Prostate gland (tissue), 2 donors: ENCODE measurements at regions of chr2 and their contacts with region 1.

Region 1: DNA sequence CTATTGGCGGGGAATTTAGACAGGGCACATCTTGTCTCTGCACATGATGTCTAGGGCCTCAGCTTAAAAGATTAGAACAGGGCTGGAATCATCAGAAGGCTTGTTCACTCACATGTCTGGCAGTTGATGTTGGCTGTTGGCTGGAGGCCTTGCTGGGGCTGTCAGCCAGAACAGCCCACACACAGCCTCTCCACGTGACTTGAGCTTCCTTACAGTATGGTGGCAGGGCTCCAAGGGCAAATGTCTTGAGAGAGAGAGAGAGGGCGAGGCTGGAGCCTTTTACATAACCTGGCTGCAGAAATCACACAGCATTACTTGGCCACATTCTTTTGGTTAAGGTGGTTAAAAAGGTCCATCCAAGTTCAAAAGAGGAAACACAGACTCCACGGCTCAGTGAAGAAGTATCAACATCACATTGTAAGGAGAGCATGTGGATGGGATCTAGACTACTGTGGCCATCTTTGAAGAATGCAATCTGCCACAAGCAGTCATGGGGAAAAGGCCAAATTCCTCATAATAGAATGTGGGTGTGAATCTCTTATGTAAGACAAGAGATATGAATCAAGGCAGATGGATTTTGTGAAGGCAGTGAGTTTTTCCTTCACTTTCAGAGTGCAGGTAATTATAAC is 30.4 kb downstream of the SRSF7 start:
- DNase-seq: peak; percentile 68
- H3K4me3 ChIP-seq: no peak overlapping the region
- H3K27ac ChIP-seq: peak overlapping the region; percentile 29 to 46
- H3K4me1 ChIP-seq: no peaks in the 10 kb centered on the region
- H3K27me3 ChIP-seq: no peaks in the 10 kb centered on the region
- CTCF ChIP-seq: no peak
- POLR2A ChIP-seq: no peak

Region 2: GRCh38 chr2:38581193-38582147 is 139.3 kb before region 1 on chr2:
- intact Hi-C with region 1: loop called (anchors 5 kb)
- DNase-seq: peak; percentile 41
- H3K4me3 ChIP-seq: no peak overlapping the region
- H3K27ac ChIP-seq: no peak overlapping the region
- H3K4me1 ChIP-seq: no peaks in the 10 kb centered on the region
- H3K27me3 ChIP-seq: no peaks in the 10 kb centered on the region
- CTCF ChIP-seq: peak; percentile 15 to 78 (median 74)
- POLR2A ChIP-seq: no peak

Region 3: DNA sequence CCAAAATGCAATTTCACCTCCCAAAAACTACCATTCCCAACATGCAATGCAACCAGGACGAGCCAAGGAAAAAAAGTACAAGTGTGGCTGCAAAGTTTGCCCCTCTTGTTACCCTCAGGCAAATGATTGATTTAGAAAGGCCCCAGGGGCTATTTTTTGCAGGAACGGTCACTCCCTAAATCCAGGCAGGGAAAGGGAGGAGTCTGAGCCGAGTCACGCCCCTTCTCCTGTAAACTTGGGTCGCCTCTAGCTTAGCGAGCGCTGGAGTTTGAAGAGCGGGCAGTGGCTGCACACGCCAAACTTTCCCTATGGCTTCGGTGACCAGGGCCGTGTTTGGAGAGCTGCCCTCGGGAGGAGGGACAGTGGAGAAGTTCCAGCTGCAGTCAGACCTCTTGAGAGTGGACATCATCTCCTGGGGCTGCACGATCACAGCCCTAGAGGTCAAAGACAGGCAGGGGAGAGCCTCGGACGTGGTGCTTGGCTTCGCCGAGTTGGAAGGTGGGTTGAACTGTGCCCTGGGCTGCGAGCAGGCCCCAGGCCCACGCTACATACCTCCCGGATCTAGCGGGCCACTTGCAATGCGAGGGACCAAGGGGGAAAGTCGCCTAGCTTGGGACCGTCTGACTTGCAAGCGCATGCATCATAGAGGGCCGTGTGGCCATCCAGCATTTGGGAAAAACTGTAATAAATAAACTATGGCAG is 54.7 kb before region 1 on chr2 and contains the start of gene GALM:
- intact Hi-C with region 1: loop called (anchors 10 kb)
- DNase-seq: peak; percentile 56
- H3K4me3 ChIP-seq: peak within 1 kb of the TSS; percentile 30 to 41
- H3K27ac ChIP-seq: peak within 1 kb of the TSS; percentile 49 to 60
- H3K4me1 ChIP-seq: no peaks in the 10 kb centered on the region
- H3K27me3 ChIP-seq: no peaks in the 10 kb centered on the region
- CTCF ChIP-seq: no peak
- POLR2A ChIP-seq: peak; percentile 60
- total RNA-seq, gene GALM: 5.6 to 22.3 TPM

Region 4: DNA sequence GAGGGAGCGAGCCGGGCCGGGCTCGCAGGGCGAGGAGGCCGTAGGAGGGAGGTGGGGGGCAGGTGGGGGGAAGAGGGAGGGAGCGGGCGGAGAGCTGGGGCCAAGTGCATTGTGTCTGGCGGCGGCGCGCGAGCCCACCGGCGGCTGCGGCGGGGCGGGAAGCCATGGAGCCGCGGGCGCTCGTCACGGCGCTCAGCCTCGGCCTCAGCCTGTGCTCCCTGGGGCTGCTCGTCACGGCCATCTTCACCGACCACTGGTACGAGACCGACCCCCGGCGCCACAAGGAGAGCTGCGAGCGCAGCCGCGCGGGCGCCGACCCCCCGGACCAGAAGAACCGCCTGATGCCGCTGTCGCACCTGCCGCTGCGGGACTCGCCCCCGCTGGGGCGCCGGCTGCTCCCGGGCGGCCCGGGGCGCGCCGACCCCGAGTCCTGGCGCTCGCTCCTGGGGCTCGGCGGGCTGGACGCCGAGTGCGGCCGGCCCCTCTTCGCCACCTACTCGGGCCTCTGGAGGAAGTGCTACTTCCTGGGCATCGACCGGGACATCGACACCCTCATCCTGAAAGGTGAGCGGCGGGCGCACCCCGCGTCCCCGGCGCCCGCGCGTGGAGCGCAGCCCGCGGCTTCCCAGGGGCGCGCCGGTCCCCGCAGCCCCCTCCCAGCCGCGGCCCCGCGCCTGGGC is 945.2 kb after region 1 on chr2 and contains the start of gene TMEM178A:
- intact Hi-C with region 1: no loop called
- DNase-seq: no peak
- H3K4me3 ChIP-seq: peak within 1 kb of the TSS; percentile 49 to 55
- H3K27ac ChIP-seq: no peak within 1 kb of the TSS
- H3K4me1 ChIP-seq: no peaks in the 10 kb centered on the region
- H3K27me3 ChIP-seq: no peaks in the 10 kb centered on the region
- CTCF ChIP-seq: no peak
- POLR2A ChIP-seq: no peak
- total RNA-seq, gene TMEM178A: 2.6 to 6.9 TPM